AG04449 (cell line): ENCODE measurements at regions of chr4 and their contacts with region 1.

Region 1: GRCh38 chr4:107736924-107737448 is 17.0 kb upstream of the PAPSS1 start:
- DNase-seq: no peak
- H3K4me3 ChIP-seq: no peak overlapping the region
- CTCF ChIP-seq: peak; percentile 74

Region 2: GRCh38 chr4:107708232-107708631 is 28.8 kb before region 1 on chr4:
- CTCF ChIA-PET with region 1: interaction called, 13 read pairs
- POLR2A ChIA-PET with region 1: no interaction called
- DNase-seq: no peak
- H3K4me3 ChIP-seq: no peak overlapping the region
- CTCF ChIP-seq: no peak

Region 3: GRCh38 chr4:107719922-107720722 is 16.9 kb before region 1 on chr4 and contains the start of gene PAPSS1:
- CTCF ChIA-PET with region 1: interaction called, 42 read pairs
- POLR2A ChIA-PET with region 1: no interaction called
- DNase-seq: peak; percentile 78
- H3K4me3 ChIP-seq: peak within 1 kb of the TSS; percentile 85
- CTCF ChIP-seq: no peak

Region 4: GRCh38 chr4:107747748-107748486 is 10.9 kb after region 1 on chr4:
- CTCF ChIA-PET with region 1: interaction called, 36 read pairs
- POLR2A ChIA-PET with region 1: no interaction called
- DNase-seq: no peak
- H3K4me3 ChIP-seq: no peak overlapping the region
- CTCF ChIP-seq: no peak

Region 5: GRCh38 chr4:107913281-107913899 is 176.4 kb after region 1 on chr4:
- CTCF ChIA-PET with region 1: interaction called, 13 read pairs
- POLR2A ChIA-PET with region 1: no interaction called
- DNase-seq: no peak
- H3K4me3 ChIP-seq: no peak overlapping the region
- CTCF ChIP-seq: peak; percentile 62